Colonic mucosa (tissue), 4 donors: ENCODE measurements at regions of chr2 and their contacts with region 1.

Region 1: DNA sequence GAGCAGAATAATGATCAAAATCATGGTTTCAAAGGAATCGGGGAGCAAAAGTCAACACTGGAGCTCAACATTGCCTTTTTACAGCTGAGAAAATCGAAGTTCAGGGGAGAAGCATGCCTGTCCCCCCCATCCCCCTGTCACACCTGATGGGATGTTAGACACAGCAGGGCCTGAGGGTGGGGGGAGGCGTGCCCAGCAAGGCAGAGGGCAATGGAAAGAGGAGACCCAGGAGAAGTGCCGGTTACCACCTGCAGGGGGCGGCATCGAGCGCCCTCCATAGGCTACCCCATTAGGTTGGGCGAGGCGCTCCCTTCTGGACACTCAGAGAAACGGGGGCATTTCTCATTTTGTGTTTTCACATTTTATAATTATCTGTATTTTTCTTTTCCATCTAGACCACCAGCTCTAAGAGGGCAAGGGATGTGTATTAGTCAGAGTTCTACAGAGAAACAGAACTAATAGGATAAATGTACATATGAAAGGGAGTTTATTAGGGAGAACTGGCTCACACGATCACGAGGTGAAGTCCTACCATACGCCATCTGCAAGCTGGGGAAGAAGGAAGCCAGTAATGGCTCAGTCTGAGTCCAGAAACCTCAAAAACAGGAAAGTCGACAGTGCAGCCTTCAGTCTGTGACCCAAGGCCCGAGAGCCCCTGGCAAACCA is 271.3 kb downstream of the LRATD1 start:
- DNase-seq: peak; percentile 62
- H3K4me3 ChIP-seq: no peak overlapping the region
- H3K27ac ChIP-seq: no peak overlapping the region
- H3K4me1 ChIP-seq: no peaks in the 10 kb centered on the region
- H3K27me3 ChIP-seq: no peaks in the 10 kb centered on the region
- CTCF ChIP-seq: peak; percentile 81

Region 2: DNA sequence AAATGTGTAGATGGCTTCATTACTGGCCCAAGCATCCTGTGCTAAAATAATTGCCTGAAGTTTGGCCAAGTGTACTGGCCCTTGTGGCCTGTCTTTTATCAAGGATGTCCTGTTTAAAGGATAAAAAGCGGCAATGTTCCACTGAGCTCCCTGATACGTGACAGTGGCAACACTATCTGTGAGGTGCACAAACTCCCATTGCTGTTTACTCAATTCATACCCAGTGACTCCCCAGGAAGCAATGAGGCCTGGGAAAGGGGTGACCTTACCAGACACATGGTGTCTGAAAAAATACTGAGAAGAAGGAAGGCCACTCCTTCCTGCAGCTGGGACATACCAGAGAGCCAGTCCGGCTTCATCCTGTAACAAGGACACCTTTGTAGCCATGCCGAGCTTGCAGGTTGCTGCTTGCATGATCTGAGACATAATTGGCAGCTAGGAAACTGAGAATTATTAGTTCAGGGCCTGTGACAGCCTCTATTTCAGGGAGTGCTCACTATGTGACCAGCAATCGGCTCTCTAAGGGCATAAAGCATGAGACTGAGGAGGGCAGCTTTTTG is 469.8 kb before region 1 on chr2:
- intact Hi-C with region 1: loop called (anchors 5 kb)
- DNase-seq: no peak
- H3K4me3 ChIP-seq: no peak overlapping the region
- H3K27ac ChIP-seq: no peak overlapping the region
- H3K4me1 ChIP-seq: no peaks in the 10 kb centered on the region
- H3K27me3 ChIP-seq: no peaks in the 10 kb centered on the region
- CTCF ChIP-seq: no peak

Region 3: DNA sequence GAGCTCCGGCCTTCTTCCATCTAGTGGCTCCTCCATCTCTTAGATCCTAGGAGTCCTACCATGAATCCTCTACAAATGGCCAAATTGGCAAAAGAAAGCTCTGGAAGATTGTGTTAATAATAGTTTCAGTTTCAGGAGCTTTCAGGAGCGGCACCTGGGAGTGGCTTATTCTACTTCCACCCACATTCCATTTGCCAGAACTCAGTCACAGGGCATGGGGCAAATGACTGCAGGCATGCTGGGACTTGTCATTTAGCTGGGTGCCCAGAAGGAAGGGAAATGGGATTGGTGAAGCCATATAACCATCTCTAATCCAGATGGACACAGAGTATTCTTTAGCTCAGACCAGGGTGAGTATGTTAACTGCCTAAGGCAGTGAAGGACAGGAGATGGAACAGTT is 274.9 kb before region 1 on chr2:
- intact Hi-C with region 1: no loop called
- DNase-seq: peak; percentile 80
- H3K4me3 ChIP-seq: no peak overlapping the region
- H3K27ac ChIP-seq: peak overlapping the region; percentile 19
- H3K4me1 ChIP-seq: peaks cover 4% of the 10 kb centered on the region
- H3K27me3 ChIP-seq: no peaks in the 10 kb centered on the region
- CTCF ChIP-seq: no peak

Region 4: GRCh38 chr2:15842758-15843666 is 939.2 kb after region 1 on chr2:
- intact Hi-C with region 1: no loop called
- DNase-seq: no peak
- H3K4me3 ChIP-seq: no peak overlapping the region
- H3K27ac ChIP-seq: no peak overlapping the region
- H3K4me1 ChIP-seq: no peaks in the 10 kb centered on the region
- H3K27me3 ChIP-seq: no peaks in the 10 kb centered on the region
- CTCF ChIP-seq: no peak